MCF 10A (cell line): ENCODE measurements at regions of chr7 and their contacts with region 1.

Region 1: GRCh38 chr7:5596046-5596895 is 172.6 kb upstream of the TNRC18 start:
- DNase-seq: peak; percentile 95
- H3K4me3 Mint-ChIP-seq: peak overlapping the region; percentile 92
- H3K27ac Mint-ChIP-seq: peak overlapping the region; percentile 93
- H3K4me1 Mint-ChIP-seq: peaks cover 30% of the 10 kb centered on the region
- H3K27me3 Mint-ChIP-seq: no peaks in the 10 kb centered on the region
- CTCF ChIP-seq: no peak

Region 2: DNA sequence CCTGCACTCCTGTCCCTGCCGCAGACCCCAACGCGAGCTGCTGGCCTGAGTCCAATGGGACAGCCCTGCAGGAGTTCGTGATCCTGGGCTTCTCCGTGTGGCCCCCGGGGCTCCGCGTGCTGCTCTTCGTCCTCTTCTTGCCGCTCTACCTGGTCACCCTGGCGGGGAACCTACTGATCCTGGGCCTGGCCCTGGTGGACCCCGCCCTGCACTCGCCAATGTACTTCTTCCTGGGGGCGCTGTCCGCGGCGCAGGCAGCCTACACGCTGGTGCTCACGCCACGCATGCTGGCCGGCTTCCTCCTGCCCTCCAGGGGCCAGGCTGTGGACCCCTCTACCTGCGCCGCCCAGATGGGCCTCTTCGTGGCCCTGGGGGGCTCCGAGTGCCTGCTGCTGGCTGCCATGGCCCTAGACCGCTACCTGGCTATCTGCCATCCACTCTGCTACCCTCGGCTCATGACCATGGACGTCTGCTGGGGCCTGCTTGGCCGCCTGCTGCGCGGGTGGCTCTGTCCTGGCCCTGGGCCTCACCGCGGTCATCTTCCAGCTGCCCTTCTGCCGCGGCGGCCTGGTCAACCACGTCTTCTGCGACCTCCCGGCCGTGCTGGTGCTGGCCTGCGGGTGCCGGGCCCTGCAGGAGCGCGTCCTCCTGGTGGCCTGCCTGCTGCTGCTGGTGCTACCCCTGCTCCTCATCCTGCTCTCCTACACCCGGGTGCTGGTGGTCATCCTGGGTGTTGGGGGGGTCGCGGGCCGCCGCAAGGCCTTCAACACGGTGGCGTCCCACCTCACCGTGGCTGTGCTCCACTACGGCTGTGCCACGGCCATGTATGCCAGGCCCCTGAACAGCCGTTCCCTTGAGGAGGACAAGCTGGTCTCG is 478.9 kb before region 1 on chr7:
- CTCF ChIA-PET with region 1: no interaction called
- POLR2A ChIA-PET with region 1: no interaction called
- intact Hi-C with region 1: no loop called
- DNase-seq: no peak
- H3K4me3 Mint-ChIP-seq: no peak overlapping the region
- H3K27ac Mint-ChIP-seq: no peak overlapping the region
- H3K4me1 Mint-ChIP-seq: no peaks in the 10 kb centered on the region
- H3K27me3 Mint-ChIP-seq: peaks cover 14% of the 10 kb centered on the region
- CTCF ChIP-seq: no peak

Region 3: GRCh38 chr7:5354460-5355232 is 241.6 kb before region 1 on chr7:
- CTCF ChIA-PET with region 1: no interaction called
- POLR2A ChIA-PET with region 1: no interaction called
- intact Hi-C with region 1: no loop called
- DNase-seq: no peak
- H3K4me3 Mint-ChIP-seq: no peak overlapping the region
- H3K27ac Mint-ChIP-seq: peak overlapping the region; percentile 79
- H3K4me1 Mint-ChIP-seq: peaks cover 12% of the 10 kb centered on the region
- H3K27me3 Mint-ChIP-seq: no peaks in the 10 kb centered on the region
- CTCF ChIP-seq: no peak

Region 4: DNA sequence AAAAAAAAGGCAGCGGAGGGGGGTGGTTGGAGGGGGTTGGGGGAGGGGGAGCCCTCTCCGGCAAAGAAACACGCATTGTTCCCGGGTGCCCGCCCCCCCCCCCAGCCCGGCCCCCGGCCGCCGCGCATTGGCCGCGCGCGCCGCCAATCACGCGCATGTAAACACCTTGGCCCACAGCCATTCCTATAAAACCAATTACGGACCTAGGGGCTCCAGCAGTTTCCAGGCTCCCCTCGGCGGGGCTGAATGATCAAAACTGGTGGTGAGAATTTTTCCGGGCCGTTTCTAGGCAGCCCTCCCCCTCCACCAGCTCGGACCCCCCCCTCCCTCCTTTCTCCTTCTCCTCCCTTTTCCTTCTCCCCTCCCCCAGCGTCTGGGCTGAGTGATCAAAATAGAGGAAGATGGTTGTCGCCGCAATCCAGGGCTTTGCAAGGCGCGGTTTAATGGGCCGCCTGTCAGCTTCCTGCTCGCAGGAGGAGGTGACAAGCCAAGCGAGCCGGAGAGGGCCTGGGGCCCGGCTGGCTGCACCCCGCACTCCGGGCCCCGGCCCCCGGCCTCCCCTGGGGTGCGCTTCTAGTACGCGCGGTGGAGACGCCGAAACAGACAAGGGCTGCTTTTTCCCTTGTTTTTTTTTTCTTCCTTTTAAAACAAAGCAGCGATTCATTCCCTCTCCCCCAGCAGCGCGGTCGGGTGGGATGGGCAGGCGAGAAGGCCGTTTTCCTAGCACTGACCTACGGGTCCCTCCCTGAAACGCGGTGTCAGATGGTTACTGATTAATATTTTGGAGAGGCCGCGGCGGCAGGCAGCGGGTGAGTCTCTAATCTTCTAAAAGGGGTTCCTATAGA is 172.2 kb before region 1 on chr7:
- CTCF ChIA-PET with region 1: no interaction called
- POLR2A ChIA-PET with region 1: interaction called, 14 read pairs
- intact Hi-C with region 1: no loop called
- DNase-seq: peak; percentile 99
- H3K4me3 Mint-ChIP-seq: peak overlapping the region; percentile 98
- H3K27ac Mint-ChIP-seq: peak overlapping the region; percentile 94
- H3K4me1 Mint-ChIP-seq: no peaks in the 10 kb centered on the region
- H3K27me3 Mint-ChIP-seq: no peaks in the 10 kb centered on the region
- CTCF ChIP-seq: no peak

Region 5: DNA sequence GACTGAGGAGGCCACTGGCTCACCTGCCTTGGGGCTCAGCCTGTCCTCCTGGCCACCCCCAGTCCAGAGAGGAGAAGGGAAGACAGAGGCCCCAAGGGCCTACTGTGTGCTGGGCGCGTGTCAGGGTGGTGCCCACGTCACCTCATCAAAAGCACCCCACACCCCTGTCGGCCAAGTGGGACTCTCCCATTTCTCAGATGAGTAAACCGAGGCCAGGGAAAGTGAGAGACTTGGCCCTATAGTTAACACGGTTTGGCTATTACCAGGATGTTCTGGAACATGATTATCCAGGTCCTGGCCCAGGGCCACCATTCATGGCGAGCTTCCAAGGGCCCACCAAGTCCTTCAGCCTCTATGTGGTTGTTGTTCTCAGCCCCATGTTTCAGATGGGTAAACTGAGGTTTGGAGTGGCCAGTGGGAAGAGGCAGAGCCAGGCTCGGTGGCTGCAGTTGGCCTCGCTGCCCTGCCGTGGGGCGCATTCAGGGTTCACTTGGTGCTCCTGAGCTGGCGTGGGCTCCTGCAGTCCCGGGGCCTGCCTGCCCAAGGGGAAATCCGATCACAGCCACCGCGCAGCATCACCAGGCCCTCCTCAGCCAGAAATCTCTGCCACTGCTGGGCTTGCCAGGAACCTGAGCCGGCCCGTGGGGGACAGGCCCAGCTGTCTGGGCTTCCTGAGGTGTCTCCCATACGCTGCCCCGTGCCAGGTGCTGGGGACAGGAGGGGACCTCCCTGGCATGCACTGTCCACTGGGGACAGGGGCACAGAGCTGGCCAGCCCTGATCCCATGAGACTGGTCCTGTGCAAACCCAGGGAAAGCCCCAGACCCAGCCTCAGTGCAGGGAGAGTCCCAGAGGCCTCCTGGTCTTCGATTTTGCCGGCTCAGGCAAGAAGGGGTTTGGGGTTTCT is 54.9 kb before region 1 on chr7:
- CTCF ChIA-PET with region 1: no interaction called
- POLR2A ChIA-PET with region 1: no interaction called
- intact Hi-C with region 1: no loop called
- DNase-seq: no peak
- H3K4me3 Mint-ChIP-seq: no peak overlapping the region
- H3K27ac Mint-ChIP-seq: no peak overlapping the region
- H3K4me1 Mint-ChIP-seq: no peaks in the 10 kb centered on the region
- H3K27me3 Mint-ChIP-seq: no peaks in the 10 kb centered on the region
- CTCF ChIP-seq: no peak

Region 6: GRCh38 chr7:5557920-5558401 is 38.3 kb before region 1 on chr7:
- CTCF ChIA-PET with region 1: interaction called, 3 read pairs
- POLR2A ChIA-PET with region 1: interaction called, 15 read pairs
- intact Hi-C with region 1: no loop called
- DNase-seq: peak; percentile 67
- H3K4me3 Mint-ChIP-seq: peak overlapping the region; percentile 66
- H3K27ac Mint-ChIP-seq: peak overlapping the region; percentile 73
- H3K4me1 Mint-ChIP-seq: peaks cover 23% of the 10 kb centered on the region
- H3K27me3 Mint-ChIP-seq: no peaks in the 10 kb centered on the region
- CTCF ChIP-seq: no peak

Region 7: GRCh38 chr7:5610500-5611186 is 14.4 kb after region 1 on chr7:
- CTCF ChIA-PET with region 1: interaction called, 4 read pairs
- POLR2A ChIA-PET with region 1: interaction called, 11 read pairs
- intact Hi-C with region 1: no loop called
- DNase-seq: no peak
- H3K4me3 Mint-ChIP-seq: no peak overlapping the region
- H3K27ac Mint-ChIP-seq: no peak overlapping the region
- H3K4me1 Mint-ChIP-seq: peaks cover 12% of the 10 kb centered on the region
- H3K27me3 Mint-ChIP-seq: no peaks in the 10 kb centered on the region
- CTCF ChIP-seq: no peak

Region 8: GRCh38 chr7:5636914-5637313 is 40.6 kb after region 1 on chr7:
- CTCF ChIA-PET with region 1: interaction called, 6 read pairs
- POLR2A ChIA-PET with region 1: interaction called, 4 read pairs
- intact Hi-C with region 1: loop called (anchors 5 kb)
- DNase-seq: peak; percentile 64
- H3K4me3 Mint-ChIP-seq: no peak overlapping the region
- H3K27ac Mint-ChIP-seq: peak overlapping the region; percentile 52
- H3K4me1 Mint-ChIP-seq: peaks cover 21% of the 10 kb centered on the region
- H3K27me3 Mint-ChIP-seq: no peaks in the 10 kb centered on the region
- CTCF ChIP-seq: no peak

Region 9: GRCh38 chr7:5646852-5647251 is 50.6 kb after region 1 on chr7:
- CTCF ChIA-PET with region 1: interaction called, 12 read pairs
- POLR2A ChIA-PET with region 1: interaction called, 5 read pairs
- intact Hi-C with region 1: loop called (anchors 5 kb)
- DNase-seq: peak; percentile 95
- H3K4me3 Mint-ChIP-seq: peak overlapping the region; percentile 8
- H3K27ac Mint-ChIP-seq: peak overlapping the region; percentile 84
- H3K4me1 Mint-ChIP-seq: peaks cover 25% of the 10 kb centered on the region
- H3K27me3 Mint-ChIP-seq: no peaks in the 10 kb centered on the region
- CTCF ChIP-seq: no peak